Heart left ventricle (tissue), 16 donors: ENCODE measurements at regions of chr16 and their contacts with region 1.

Region 1: DNA sequence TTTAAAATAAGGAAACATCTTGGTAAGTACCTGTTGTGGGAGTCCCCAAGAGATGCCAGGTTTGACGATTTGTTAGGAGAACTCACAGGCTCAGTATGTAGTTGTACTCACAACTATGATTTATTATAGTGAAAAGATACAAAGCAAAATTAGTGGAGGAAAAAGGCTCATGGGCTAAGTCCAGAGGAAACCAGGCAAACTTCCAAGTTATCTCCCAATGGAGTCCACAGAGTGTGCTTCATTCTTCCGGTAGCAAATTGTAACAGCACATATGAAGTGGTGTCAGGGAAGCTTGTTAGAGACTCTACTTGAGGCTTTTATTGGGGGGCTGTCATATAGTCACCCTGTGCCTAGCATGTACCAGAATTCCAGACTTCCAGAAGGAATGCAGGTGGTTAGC is 2.3 kb downstream of the DDX19A start:
- DNase-seq: no peak
- ATAC-seq: no peak
- H3K4me3 ChIP-seq: no peak overlapping the region
- H3K27ac ChIP-seq: peak overlapping the region in 1 of 12 donors; percentile 10
- H3K4me1 ChIP-seq: peaks cover 0 to 36% (median 30%) of the 10 kb centered on the region in 12 donors
- H3K27me3 ChIP-seq: no peaks in the 10 kb centered on the region
- CTCF ChIP-seq: no peak
- POLR2A ChIP-seq: no peak

Region 2: GRCh38 chr16:70162041-70162451 is 186.9 kb before region 1 on chr16:
- intact Hi-C with region 1: no loop called
- DNase-seq: no peak
- ATAC-seq: no peak
- H3K4me3 ChIP-seq: no peak overlapping the region
- H3K27ac ChIP-seq: no peak overlapping the region
- H3K4me1 ChIP-seq: no peaks in the 10 kb centered on the region
- H3K27me3 ChIP-seq: no peaks in the 10 kb centered on the region
- CTCF ChIP-seq: no peak
- POLR2A ChIP-seq: no peak

Region 3: DNA sequence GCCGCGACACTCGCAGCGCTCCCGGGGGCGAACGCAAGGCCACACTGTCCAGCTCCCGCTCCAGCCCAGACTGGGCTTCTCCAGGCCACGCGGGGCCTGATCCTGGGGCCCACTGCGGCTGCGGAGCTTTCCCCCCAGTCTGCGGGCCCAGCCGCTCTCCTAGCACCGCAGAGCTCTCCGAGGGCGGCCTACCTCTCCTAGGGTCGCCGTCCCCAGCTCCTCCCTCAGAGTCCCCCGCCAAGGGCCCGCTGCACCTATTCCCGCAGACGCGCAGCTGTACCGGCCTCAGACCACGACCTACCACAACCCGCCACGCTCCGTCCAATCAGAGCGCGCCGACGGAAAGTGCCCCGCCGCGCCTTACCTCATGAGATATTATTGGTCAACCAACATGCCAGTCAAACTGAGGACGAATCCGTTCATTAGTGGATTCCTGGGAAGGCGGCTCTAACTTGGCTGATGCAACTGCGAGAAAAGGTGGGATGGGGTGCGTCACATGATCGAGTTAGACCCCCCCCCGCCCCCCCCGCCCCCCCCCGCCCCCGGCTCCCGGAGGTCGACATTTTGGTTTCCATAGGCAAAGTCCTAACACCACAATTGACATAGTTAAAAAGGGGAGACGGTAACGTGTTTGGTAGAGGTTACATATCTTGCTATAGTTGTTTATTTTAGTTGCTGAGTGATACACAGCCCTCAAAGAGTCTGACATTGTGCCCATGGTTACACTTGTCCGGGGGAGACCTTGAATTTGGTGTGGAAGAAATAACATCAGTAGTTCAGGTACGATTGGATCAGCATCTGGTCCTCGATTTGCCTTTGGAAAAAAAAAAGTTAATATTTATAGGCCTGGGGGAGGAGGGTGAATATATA is 59.5 kb before region 1 on chr16 and contains the start of gene AARS1:
- intact Hi-C with region 1: loop called in 1 of 10 experiments (anchors 10 kb)
- DNase-seq: peak; percentile 96 to 98 (median 97)
- ATAC-seq: peak; percentile 99 to 100 (median 99)
- H3K4me3 ChIP-seq: peak within 1 kb of the TSS; percentile 47 to 99 (median 78)
- H3K27ac ChIP-seq: peak within 1 kb of the TSS; percentile 66 to 93 (median 86)
- H3K4me1 ChIP-seq: peaks cover 0 to 25% (median 12%) of the 10 kb centered on the region in 12 donors
- H3K27me3 ChIP-seq: no peaks in the 10 kb centered on the region
- CTCF ChIP-seq: peak in 1 of 12 donors; percentile 15
- POLR2A ChIP-seq: peak; percentile 56 to 94
- total RNA-seq, gene AARS1: 53.1 to 96.2 (median 63.2) TPM

Region 4: GRCh38 chr16:70298988-70299938 is 49.7 kb before region 1 on chr16 and contains the start of gene DDX19B:
- intact Hi-C with region 1: loop called in 9 of 10 experiments (anchors 1 to 10 kb)
- DNase-seq: peak; percentile 77 to 90 (median 85)
- ATAC-seq: peak; percentile 91 to 96 (median 94)
- H3K4me3 ChIP-seq: peak within 1 kb of the TSS; percentile 77 to 98 (median 88)
- H3K27ac ChIP-seq: peak within 1 kb of the TSS; percentile 84 to 96 (median 93)
- H3K4me1 ChIP-seq: peaks cover 0 to 24% (median 9%) of the 10 kb centered on the region in 12 donors
- H3K27me3 ChIP-seq: no peaks in the 10 kb centered on the region
- CTCF ChIP-seq: no peak
- POLR2A ChIP-seq: peak in 1 of 2 donors; percentile 49
- total RNA-seq, gene DDX19B: 16.9 to 34.2 (median 20.9) TPM

Region 5: GRCh38 chr16:70304892-70305448 is 44.0 kb before region 1 on chr16:
- intact Hi-C with region 1: loop called in 1 of 10 experiments (anchors 5 kb)
- DNase-seq: no peak
- ATAC-seq: no peak
- H3K4me3 ChIP-seq: no peak overlapping the region
- H3K27ac ChIP-seq: peak overlapping the region in 1 of 12 donors; percentile 66
- H3K4me1 ChIP-seq: peaks cover 0 to 26% (median under 1%) of the 10 kb centered on the region in 12 donors
- H3K27me3 ChIP-seq: no peaks in the 10 kb centered on the region
- CTCF ChIP-seq: no peak
- POLR2A ChIP-seq: no peak

Region 6: GRCh38 chr16:70375636-70376611 is 26.9 kb after region 1 on chr16:
- intact Hi-C with region 1: no loop called
- DNase-seq: no peak
- ATAC-seq: no peak
- H3K4me3 ChIP-seq: no peak overlapping the region
- H3K27ac ChIP-seq: no peak overlapping the region
- H3K4me1 ChIP-seq: peaks cover 0 to 20% (median 13%) of the 10 kb centered on the region in 12 donors
- H3K27me3 ChIP-seq: no peaks in the 10 kb centered on the region
- CTCF ChIP-seq: no peak
- POLR2A ChIP-seq: no peak

Region 7: GRCh38 chr16:70454222-70455034 is 105.4 kb after region 1 on chr16 and contains the start of gene FCSK:
- intact Hi-C with region 1: no loop called
- DNase-seq: peak; percentile 61 to 85 (median 72)
- ATAC-seq: peak; percentile 59 to 95 (median 94)
- H3K4me3 ChIP-seq: peak within 1 kb of the TSS; percentile 76 to 99 (median 93)
- H3K27ac ChIP-seq: peak within 1 kb of the TSS; percentile 88 to 98 (median 94)
- H3K4me1 ChIP-seq: peaks cover 0 to 26% (median 12%) of the 10 kb centered on the region in 12 donors
- H3K27me3 ChIP-seq: no peaks in the 10 kb centered on the region
- CTCF ChIP-seq: peak in 3 of 12 donors; percentile 4 to 16 (median 7)
- POLR2A ChIP-seq: peak in 1 of 2 donors; percentile 36
- total RNA-seq, gene FCSK: 6.5 to 17.3 (median 8.2) TPM

Region 8: DNA sequence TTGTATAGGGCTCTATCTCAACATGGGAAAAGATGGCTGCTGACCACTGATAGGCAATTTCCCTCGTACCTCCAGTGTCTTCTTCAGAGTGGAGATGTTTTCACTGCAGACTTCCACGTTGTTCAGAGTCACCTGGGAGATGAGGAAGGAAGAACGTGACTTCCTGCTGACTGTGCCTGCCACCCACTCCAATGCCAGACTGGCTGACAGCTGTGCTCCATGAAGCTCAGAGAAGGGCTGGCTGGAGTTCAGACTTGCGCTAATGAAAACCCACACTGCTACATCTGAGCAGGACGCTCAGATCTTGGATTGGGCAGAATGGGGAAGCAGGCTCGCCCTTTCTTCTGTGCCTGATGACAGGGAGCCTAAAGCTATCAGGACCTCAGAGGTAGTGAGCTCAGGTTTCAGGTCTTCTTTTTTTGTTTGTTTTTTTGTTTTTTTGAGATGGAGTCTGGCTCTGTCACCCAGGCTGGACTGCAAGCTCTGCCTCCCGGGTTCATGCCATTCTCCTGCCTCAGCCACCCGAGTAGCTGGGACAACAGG is 141.3 kb after region 1 on chr16:
- intact Hi-C with region 1: no loop called
- DNase-seq: peak in 1 of 5 donors; percentile 42
- ATAC-seq: peak in 1 of 4 donors; percentile 62
- H3K4me3 ChIP-seq: no peak overlapping the region
- H3K27ac ChIP-seq: no peak overlapping the region
- H3K4me1 ChIP-seq: peaks cover 0 to 14% (median 0%) of the 10 kb centered on the region in 12 donors
- H3K27me3 ChIP-seq: no peaks in the 10 kb centered on the region
- CTCF ChIP-seq: no peak
- POLR2A ChIP-seq: no peak

Region 9: GRCh38 chr16:70534971-70535370 is 186.0 kb after region 1 on chr16:
- intact Hi-C with region 1: loop called in 1 of 10 experiments (anchors 10 kb)
- DNase-seq: no peak
- ATAC-seq: no peak
- H3K4me3 ChIP-seq: no peak overlapping the region
- H3K27ac ChIP-seq: no peak overlapping the region
- H3K4me1 ChIP-seq: peaks cover 0 to 10% (median 0%) of the 10 kb centered on the region in 12 donors
- H3K27me3 ChIP-seq: no peaks in the 10 kb centered on the region
- CTCF ChIP-seq: no peak
- POLR2A ChIP-seq: no peak